ENCODE measurements at regions of chr14 and their contacts with region 1.

Region 1: GRCh38 chr14:25042362-25043299 is 7.3 kb downstream of the STXBP6 start:
- DNase-seq: peak in 5 of 10 donors; percentile 32 to 85 (median 50)

Region 2: DNA sequence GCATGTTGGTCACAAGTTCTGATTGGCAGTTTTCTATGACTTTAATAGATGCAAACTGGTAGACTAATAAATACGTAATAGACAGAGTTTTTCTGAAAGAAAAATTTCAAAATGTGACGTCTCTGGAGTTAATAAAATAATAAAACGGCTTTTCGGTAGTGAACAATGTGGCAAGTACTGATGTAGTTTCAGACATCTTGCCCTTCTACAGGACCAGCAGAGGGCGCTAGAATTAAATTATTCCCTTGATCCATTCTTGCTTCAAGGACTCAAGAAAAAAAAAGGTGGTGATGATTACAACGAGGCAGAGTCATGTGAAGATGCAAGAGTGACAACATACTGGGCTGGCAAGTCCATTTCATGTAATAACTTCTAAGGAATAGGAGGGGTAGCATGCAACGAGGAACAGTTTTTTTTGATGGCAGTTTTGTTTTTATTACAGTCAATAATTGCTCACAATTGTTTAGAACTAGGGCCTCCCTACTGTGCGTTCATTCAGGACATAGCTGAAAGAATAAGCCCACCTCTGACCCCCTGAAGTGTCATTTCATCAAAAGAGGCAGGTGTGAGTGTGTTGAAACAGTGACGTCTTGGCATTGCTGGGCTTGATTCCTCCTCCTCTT is 307.6 kb before region 1 on chr14:
- intact Hi-C with region 1: loop called (anchors 2 kb)
- DNase-seq: peak in 4 of 10 donors; percentile 22 to 70 (median 44)

Region 3: GRCh38 chr14:24806061-24806678 is 236.5 kb before region 1 on chr14:
- intact Hi-C with region 1: loop called (anchors 2 kb)
- DNase-seq: peak; percentile 31 to 92 (median 65)

Region 4: GRCh38 chr14:24879661-24880386 is 162.8 kb before region 1 on chr14:
- intact Hi-C with region 1: loop called (anchors 5 kb)
- DNase-seq: peak in 1 of 10 donors; percentile 30

Region 5: GRCh38 chr14:25340882-25341281 is 298.3 kb after region 1 on chr14:
- intact Hi-C with region 1: no loop called
- DNase-seq: no peak